Heart right ventricle (tissue), 16 donors: ENCODE measurements at regions of chr18 and their contacts with region 1.

Region 1: DNA sequence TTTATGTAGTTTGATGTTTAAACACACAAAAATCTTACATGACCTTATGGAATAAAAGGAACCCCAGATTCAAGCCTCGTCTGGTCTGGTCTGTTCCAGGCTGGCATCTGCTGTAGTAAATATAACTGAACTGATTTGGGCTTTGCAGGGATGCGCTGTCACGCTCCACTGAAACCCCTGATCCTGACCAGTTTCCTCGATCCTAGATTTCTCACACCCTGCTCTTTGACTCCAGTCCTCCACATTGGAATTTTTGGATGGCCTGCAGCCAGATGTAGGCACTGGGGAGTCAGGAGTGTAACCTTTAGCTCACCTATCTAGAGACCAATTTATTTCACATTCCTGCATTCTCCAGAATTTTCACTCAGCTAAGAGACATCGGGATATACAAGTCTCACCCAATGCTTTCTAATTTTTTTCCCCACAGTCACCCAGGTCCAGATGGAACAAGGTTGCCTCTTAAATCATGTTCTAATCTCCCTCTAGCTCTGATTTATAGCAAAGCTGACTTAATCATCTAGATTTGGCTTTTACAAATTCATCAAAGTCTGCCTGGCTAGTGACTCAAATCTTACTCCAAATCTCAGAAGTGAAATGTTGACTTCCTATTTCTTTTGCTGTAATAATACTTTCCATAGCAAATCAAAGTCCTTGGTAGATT is 219.6 kb downstream of the CD226 start:
- DNase-seq: no peak
- ATAC-seq: no peak
- H3K4me3 ChIP-seq: no peak overlapping the region
- H3K27ac ChIP-seq: no peak overlapping the region
- H3K4me1 ChIP-seq: peaks cover 0 to 8% (median 0%) of the 10 kb centered on the region in 9 donors
- H3K27me3 ChIP-seq: no peaks in the 10 kb centered on the region
- CTCF ChIP-seq: no peak

Region 2: GRCh38 chr18:69664399-69664798 is 63.6 kb before region 1 on chr18:
- intact Hi-C with region 1: loop called in 1 of 10 experiments (anchors 10 kb)
- DNase-seq: no peak
- ATAC-seq: no peak
- H3K4me3 ChIP-seq: no peak overlapping the region
- H3K27ac ChIP-seq: no peak overlapping the region
- H3K4me1 ChIP-seq: peaks cover 0 to 18% (median 1%) of the 10 kb centered on the region in 9 donors
- H3K27me3 ChIP-seq: no peaks in the 10 kb centered on the region
- CTCF ChIP-seq: no peak

Region 3: GRCh38 chr18:70036771-70037347 is 308.8 kb after region 1 on chr18:
- intact Hi-C with region 1: no loop called
- DNase-seq: no peak
- ATAC-seq: peak in 3 of 8 donors; percentile 31 to 68 (median 50)
- H3K4me3 ChIP-seq: no peak overlapping the region
- H3K27ac ChIP-seq: no peak overlapping the region
- H3K4me1 ChIP-seq: no peaks in the 10 kb centered on the region
- H3K27me3 ChIP-seq: no peaks in the 10 kb centered on the region
- CTCF ChIP-seq: no peak